ENCODE measurements at regions of chr5 and their contacts with region 1.

Region 1: GRCh38 chr5:175870820-175871447 is 444 bp upstream of the CPLX2 start:
- DNase-seq: no peak
- ATAC-seq: no peak
- H3K4me3 ChIP-seq: no peak overlapping the region
- H3K4me3 Mint-ChIP-seq: no peak overlapping the region
- H3K27ac ChIP-seq: no peak overlapping the region
- H3K27ac Mint-ChIP-seq: no peak overlapping the region
- H3K4me1 ChIP-seq: peaks cover 11% of the 10 kb centered on the region
- H3K4me1 Mint-ChIP-seq: peaks cover 15% of the 10 kb centered on the region
- H3K27me3 ChIP-seq: peaks cover 13 to 20% of the 10 kb centered on the region in 2 experiments
- H3K27me3 Mint-ChIP-seq: peaks cover 39% of the 10 kb centered on the region
- CTCF ChIP-seq: no peak

Region 2: DNA sequence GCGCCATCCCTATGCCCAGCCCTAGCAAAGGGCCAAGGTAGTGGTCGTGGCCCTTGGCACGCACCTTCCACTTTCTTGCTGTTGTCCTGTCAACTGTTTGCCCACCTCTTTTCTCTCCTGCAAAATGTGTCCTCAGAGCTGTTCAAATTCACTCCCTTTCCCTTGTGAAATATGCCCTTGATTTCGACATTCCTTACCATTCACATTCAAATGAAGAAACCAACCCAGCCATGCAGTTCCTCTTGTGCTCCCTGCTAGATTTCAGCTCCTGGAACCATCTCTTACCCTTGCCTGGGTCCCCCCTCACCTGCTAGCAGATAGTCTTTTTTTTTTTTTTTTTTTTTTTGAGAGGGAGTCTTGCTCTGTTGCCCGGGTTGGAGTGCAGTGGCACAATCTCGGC is 232.6 kb before region 1 on chr5:
- CTCF ChIA-PET with region 1: no interaction called
- POLR2A ChIA-PET with region 1: no interaction called
- intact Hi-C with region 1: no loop called
- DNase-seq: no peak
- ATAC-seq: no peak
- H3K4me3 ChIP-seq: no peak overlapping the region
- H3K4me3 Mint-ChIP-seq: no peak overlapping the region
- H3K27ac ChIP-seq: no peak overlapping the region
- H3K27ac Mint-ChIP-seq: no peak overlapping the region
- H3K4me1 ChIP-seq: peaks cover 25% of the 10 kb centered on the region
- H3K4me1 Mint-ChIP-seq: peaks cover 30% of the 10 kb centered on the region
- H3K27me3 ChIP-seq: no peaks in the 10 kb centered on the region
- H3K27me3 Mint-ChIP-seq: no peaks in the 10 kb centered on the region
- CTCF ChIP-seq: no peak

Region 3: DNA sequence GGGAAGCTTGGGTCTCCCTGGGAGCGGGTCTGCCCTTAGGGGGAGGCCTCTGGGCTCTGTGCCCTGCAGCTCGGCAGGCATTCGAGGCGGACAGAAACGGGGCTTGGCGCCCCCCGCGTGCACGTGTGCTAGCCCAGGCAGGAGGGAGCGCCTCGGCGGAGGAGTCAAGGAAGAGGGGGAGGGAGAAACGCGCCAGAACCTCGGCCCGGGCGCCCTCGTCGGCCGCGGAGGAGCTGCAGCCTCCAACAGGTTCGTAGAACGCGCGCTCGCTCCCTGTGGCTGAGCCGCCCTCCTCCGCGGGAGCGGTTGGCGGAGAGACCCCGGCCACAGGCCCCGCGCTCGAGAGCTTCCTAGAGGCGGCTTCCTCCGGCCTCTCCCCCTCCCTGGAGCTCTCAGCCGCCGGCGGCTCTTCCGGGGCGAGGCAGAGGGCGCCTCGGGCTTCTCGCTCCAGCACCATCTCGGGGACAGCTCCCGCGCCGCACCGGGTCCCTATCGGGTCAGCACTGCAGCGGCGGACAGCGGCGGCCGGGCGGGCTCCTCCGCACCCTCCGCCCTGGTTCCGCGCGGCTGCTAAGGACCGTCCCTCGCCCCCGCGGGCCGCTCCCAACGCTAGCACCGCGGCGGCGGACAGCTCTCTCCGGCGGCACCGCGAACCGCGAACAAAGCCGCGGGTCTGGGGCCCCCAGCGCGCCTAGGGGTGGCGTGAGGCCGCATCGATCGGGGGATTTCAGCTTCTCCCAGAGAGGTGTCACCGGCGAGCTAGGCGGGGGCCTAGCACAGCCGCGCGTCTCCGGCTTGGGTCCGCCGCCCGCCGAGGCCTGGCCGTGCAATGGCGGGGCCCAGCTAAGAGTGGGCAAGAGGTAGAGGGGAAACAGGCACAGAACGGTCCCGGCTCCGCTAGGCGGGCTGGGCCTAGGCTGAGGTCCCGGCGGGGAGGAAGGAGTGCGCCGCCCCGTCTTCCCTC is 74.1 kb before region 1 on chr5:
- CTCF ChIA-PET with region 1: no interaction called
- POLR2A ChIA-PET with region 1: no interaction called
- intact Hi-C with region 1: loop called (anchors 2 kb)
- DNase-seq: peak; percentile 59 to 85 (median 79)
- ATAC-seq: peak; percentile 100
- H3K4me3 ChIP-seq: peak overlapping the region in 1 of 2 experiments; percentile 16
- H3K4me3 Mint-ChIP-seq: no peak overlapping the region
- H3K27ac ChIP-seq: no peak overlapping the region
- H3K27ac Mint-ChIP-seq: no peak overlapping the region
- H3K4me1 ChIP-seq: peaks cover 11% of the 10 kb centered on the region
- H3K4me1 Mint-ChIP-seq: peaks cover 9% of the 10 kb centered on the region
- H3K27me3 ChIP-seq: peaks cover 15 to 26% of the 10 kb centered on the region in 2 experiments
- H3K27me3 Mint-ChIP-seq: peaks cover 76% of the 10 kb centered on the region
- CTCF ChIP-seq: no peak

Region 4: GRCh38 chr5:176187276-176188062 is 316.5 kb after region 1 on chr5:
- CTCF ChIA-PET with region 1: no interaction called
- POLR2A ChIA-PET with region 1: no interaction called
- intact Hi-C with region 1: no loop called
- DNase-seq: no peak
- ATAC-seq: no peak
- H3K4me3 ChIP-seq: no peak overlapping the region
- H3K4me3 Mint-ChIP-seq: no peak overlapping the region
- H3K27ac ChIP-seq: no peak overlapping the region
- H3K27ac Mint-ChIP-seq: no peak overlapping the region
- H3K4me1 ChIP-seq: no peaks in the 10 kb centered on the region
- H3K4me1 Mint-ChIP-seq: no peaks in the 10 kb centered on the region
- H3K27me3 ChIP-seq: no peaks in the 10 kb centered on the region
- H3K27me3 Mint-ChIP-seq: no peaks in the 10 kb centered on the region
- CTCF ChIP-seq: no peak

Measured in CD8-positive, alpha-beta T cell (primary cell).